GM18951 (cell line): ENCODE measurements at regions of chr1 and their contacts with region 1.

Region 1: DNA sequence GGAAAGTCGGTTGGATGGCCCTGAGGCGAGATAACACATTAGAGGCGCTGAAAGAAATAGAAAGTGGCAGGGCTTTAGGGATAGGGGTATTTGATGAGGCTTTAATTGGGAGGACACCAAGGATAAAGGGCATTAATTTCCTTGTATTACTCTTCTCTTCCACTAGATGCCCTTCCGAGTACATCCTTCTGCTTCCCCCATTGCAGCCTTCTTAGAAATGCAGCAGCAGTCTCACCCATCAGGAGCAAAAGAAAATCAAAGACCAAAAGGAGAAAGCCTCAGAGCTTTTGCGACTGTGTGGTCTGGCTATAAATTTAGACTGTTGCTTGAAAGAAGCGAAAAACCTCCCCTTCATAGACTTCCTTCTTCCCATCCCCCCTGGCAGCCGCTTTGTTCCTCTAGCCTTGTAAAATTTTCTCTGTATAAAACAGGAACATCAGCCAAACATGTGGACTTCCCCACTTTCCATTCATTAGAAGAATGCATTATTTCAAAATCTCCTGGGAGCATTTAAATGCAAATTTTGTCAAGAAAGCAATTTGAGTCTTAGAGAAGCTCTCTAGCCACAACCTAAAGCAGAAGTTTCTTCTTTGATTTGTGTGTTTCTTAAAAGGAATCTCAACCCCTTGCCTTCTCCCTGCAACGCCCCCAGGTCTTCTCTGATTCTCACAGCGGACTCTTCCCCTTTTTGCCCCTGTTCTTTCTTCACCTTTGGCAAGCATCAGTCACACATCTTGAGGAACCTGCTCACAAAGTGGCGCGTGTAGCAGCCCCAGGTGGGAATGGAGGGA is 76.6 kb downstream of the NDUFS5 start:
- POLR2A ChIP-seq: no peak

Region 2: GRCh38 chr1:39178541-39179431 is 76.1 kb after region 1 on chr1:
- in situ Hi-C with region 1: loop called (anchors 10 kb)
- POLR2A ChIP-seq: no peak

Region 3: GRCh38 chr1:39538588-39539465 is 436.1 kb after region 1 on chr1:
- in situ Hi-C with region 1: loop called (anchors 25 kb)
- POLR2A ChIP-seq: no peak